Activated naive CD4-positive, alpha-beta T cell treated with anti-CD3 and anti-CD28 coated beads for 36 hours (primary cell): ENCODE measurements at regions of chrX and their contacts with region 1.

Region 1: GRCh38 chrX:20266810-20267606 is at the start of gene RPS6KA3:
- DNase-seq: peak; percentile 91
- H3K4me3 Mint-ChIP-seq: peak within 1 kb of the TSS; percentile 84
- H3K27ac Mint-ChIP-seq: peak within 1 kb of the TSS; percentile 91
- H3K4me1 Mint-ChIP-seq: peaks cover 21% of the 10 kb centered on the region
- H3K27me3 Mint-ChIP-seq: no peaks in the 10 kb centered on the region
- total RNA-seq, gene RPS6KA3: 27.7 to 27.9 TPM

Region 2: GRCh38 chrX:19334945-19335626 is 931.9 kb before region 1 on chrX:
- CTCF ChIA-PET with region 1: no interaction called
- intact Hi-C with region 1: no loop called
- DNase-seq: peak; percentile 44
- H3K4me3 Mint-ChIP-seq: no peak overlapping the region
- H3K27ac Mint-ChIP-seq: no peak overlapping the region
- H3K4me1 Mint-ChIP-seq: no peaks in the 10 kb centered on the region
- H3K27me3 Mint-ChIP-seq: no peaks in the 10 kb centered on the region

Region 3: GRCh38 chrX:19747652-19748610 is 519.1 kb before region 1 on chrX:
- CTCF ChIA-PET with region 1: no interaction called
- intact Hi-C with region 1: loop called (anchors 5 kb)
- DNase-seq: peak; percentile 87
- H3K4me3 Mint-ChIP-seq: peak overlapping the region; percentile 65
- H3K27ac Mint-ChIP-seq: peak overlapping the region; percentile 94
- H3K4me1 Mint-ChIP-seq: peaks cover 92% of the 10 kb centered on the region
- H3K27me3 Mint-ChIP-seq: no peaks in the 10 kb centered on the region

Region 4: DNA sequence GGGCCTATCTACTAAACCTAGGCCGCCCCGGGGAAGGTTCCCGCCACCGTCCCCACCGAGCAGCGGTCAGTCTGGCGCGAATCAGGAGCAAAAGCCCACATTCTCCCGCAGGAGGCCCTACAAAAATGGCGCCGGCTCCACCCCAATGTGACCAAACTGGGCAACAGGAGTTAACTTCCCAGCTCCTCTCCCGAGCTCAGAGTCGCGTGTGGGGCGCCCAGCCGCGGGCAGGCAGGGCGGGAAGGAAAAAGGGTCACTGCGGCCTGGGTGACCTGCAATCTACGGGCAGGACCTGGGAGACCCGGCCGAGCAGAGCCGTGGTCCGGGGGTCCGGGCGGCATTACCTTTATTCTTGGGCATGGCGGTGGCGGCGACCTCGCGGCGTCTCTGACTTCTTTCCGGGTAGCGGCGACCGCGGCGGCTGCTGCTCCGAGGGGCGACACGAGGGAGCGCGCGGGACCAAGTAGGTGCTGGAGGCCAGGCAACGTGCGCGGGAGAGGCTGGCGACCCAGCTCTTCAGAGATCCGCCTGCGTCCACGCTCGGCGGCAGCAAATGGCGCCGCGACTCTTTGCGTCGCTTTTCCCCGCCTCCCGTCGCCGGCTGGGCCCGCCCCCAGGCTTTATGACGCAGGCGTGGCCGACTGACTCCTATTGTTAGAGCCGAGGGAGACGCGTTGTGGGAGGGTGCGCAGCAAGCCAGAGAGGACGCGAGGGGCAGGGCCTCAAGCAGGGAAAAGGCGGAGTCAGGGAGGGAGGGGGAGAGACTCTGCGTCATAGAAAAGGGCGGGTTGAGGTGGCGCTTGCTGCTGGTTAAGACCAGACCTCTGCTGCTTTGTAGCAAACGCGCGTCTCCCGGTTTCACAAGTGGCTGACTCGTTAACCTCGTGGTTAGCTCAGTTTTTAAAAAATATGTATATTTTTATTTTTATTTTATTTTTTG is 125.5 kb before region 1 on chrX and contains the start of gene EIF1AX:
- CTCF ChIA-PET with region 1: no interaction called
- intact Hi-C with region 1: loop called (anchors 1 kb)
- DNase-seq: peak; percentile 97
- H3K4me3 Mint-ChIP-seq: peak within 1 kb of the TSS; percentile 81
- H3K27ac Mint-ChIP-seq: peak within 1 kb of the TSS; percentile 80
- H3K4me1 Mint-ChIP-seq: peaks cover 38% of the 10 kb centered on the region
- H3K27me3 Mint-ChIP-seq: no peaks in the 10 kb centered on the region
- total RNA-seq, gene EIF1AX: 106 to 109 TPM

Region 5: GRCh38 chrX:20252381-20253231 is 14.4 kb before region 1 on chrX:
- CTCF ChIA-PET with region 1: no interaction called
- intact Hi-C with region 1: loop called (anchors 1 kb)
- DNase-seq: peak; percentile 75
- H3K4me3 Mint-ChIP-seq: no peak overlapping the region
- H3K27ac Mint-ChIP-seq: peak overlapping the region; percentile 46
- H3K4me1 Mint-ChIP-seq: peaks cover 39% of the 10 kb centered on the region
- H3K27me3 Mint-ChIP-seq: no peaks in the 10 kb centered on the region

Region 6: DNA sequence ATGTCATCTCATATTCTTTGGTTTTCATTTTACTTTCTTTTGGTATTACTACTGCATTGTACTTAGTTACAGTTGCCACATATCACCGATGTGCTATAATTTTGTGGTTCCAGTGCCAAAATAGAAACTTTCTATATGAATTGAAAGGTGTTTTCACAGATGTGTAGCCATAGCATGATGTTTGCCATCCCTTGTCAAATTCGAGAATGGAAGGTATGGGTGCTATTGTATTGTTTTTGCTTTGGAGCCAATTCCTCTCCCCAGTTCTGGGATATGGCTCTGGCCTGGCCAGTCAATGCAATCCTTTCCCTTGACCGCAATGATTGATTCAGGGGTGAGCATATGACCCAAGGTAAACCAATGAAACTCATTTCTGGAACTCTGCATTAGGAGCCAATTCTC is 85.9 kb after region 1 on chrX:
- CTCF ChIA-PET with region 1: interaction called, 4 read pairs
- intact Hi-C with region 1: loop called (anchors 1 kb)
- DNase-seq: no peak
- H3K4me3 Mint-ChIP-seq: no peak overlapping the region
- H3K27ac Mint-ChIP-seq: no peak overlapping the region
- H3K4me1 Mint-ChIP-seq: peaks cover 24% of the 10 kb centered on the region
- H3K27me3 Mint-ChIP-seq: no peaks in the 10 kb centered on the region

Region 7: DNA sequence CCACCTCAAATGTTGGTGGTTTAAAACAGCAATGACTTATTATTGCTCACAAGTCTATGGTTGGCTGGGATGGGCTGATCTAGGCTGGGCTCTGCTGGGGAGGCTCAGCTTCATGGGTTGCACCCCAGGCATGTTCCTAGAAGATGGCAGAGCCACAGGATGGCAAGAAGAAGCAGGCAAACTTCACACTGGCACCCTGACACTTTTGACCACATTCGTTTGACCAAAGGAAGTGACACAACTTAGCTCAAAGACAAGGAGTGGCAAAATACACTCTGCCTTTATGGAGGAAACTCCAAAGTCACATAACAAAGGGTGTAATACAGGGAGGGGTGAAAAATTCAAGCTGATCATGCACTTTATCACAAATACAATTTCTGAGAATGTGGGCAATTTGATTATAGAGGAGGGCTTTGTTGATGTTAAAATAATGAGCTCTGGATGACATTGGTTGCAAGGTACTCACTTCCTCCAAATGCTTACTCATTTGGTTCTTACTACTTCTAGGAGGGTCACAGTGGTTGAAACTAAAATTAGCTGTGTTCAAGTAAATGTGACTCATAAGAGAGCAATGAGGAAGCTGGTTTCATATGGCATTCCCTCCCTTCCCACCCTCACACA is 248.9 kb after region 1 on chrX:
- CTCF ChIA-PET with region 1: no interaction called
- intact Hi-C with region 1: loop called (anchors 5 kb)
- DNase-seq: peak; percentile 15
- H3K4me3 Mint-ChIP-seq: no peak overlapping the region
- H3K27ac Mint-ChIP-seq: no peak overlapping the region
- H3K4me1 Mint-ChIP-seq: peaks cover 22% of the 10 kb centered on the region
- H3K27me3 Mint-ChIP-seq: peaks cover 16% of the 10 kb centered on the region